Activated T-helper 2 cell treated with anti-CD3 and anti-CD28 coated beads, Interferon-gamma antibody, Interleukin-2, Interleukin-4, amounts not matched to agents 10 μg/mL and 5 μg/mL and 100 μg/mL, durations not matched to agents 14 hours and 24 hours and 36 hours (primary cell): ENCODE measurements at regions of chr12 and their contacts with region 1.

Region 1: GRCh38 chr12:89244536-89244935 is 107.8 kb downstream of the DUSP6 start:
- DNase-seq: peak; percentile 47
- H3K4me3 Mint-ChIP-seq: peak overlapping the region; percentile 35
- H3K27ac Mint-ChIP-seq: peak overlapping the region; percentile 85
- H3K4me1 Mint-ChIP-seq: peaks cover 67% of the 10 kb centered on the region
- H3K27me3 Mint-ChIP-seq: no peaks in the 10 kb centered on the region

Region 2: DNA sequence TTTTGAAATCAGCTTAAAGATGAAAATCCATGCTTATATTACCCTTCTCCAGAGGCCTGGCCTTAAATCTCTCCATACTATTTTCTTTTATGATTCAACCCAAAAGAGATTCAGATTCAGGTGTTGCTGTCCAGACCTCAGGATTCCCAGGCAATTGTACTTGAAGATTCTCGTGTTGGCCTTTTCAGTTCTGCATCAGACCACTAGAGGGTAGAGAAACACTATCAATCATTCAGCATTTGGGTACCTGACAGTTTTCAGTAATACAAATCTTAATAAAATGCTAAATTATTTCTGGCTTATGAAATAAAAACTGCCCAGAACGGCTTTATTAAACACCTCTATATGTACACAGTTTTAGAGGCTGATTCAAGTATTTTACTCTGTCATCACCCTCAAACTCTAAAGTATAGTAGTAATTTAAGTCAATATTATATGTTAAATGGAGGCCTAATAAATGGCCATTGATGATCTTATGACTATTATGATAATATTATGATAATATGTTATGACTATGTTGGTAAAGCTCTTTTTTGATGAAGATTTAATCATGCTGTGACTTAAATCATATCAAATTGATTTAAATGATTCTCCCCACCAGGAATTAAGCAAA is 193.4 kb before region 1 on chr12:
- intact Hi-C with region 1: loop called (anchors 1 kb)
- DNase-seq: no peak
- H3K4me3 Mint-ChIP-seq: no peak overlapping the region
- H3K27ac Mint-ChIP-seq: peak overlapping the region; percentile 42
- H3K4me1 Mint-ChIP-seq: peaks cover 43% of the 10 kb centered on the region
- H3K27me3 Mint-ChIP-seq: no peaks in the 10 kb centered on the region

Region 3: GRCh38 chr12:89179983-89180382 is 64.6 kb before region 1 on chr12:
- intact Hi-C with region 1: loop called (anchors 1 kb)
- DNase-seq: no peak
- H3K4me3 Mint-ChIP-seq: peak overlapping the region; percentile 50
- H3K27ac Mint-ChIP-seq: peak overlapping the region; percentile 86
- H3K4me1 Mint-ChIP-seq: peaks cover 71% of the 10 kb centered on the region
- H3K27me3 Mint-ChIP-seq: no peaks in the 10 kb centered on the region

Region 4: GRCh38 chr12:89261982-89262381 is 17.4 kb after region 1 on chr12:
- intact Hi-C with region 1: loop called (anchors 1 kb)
- DNase-seq: no peak
- H3K4me3 Mint-ChIP-seq: no peak overlapping the region
- H3K27ac Mint-ChIP-seq: peak overlapping the region; percentile 28
- H3K4me1 Mint-ChIP-seq: peaks cover 52% of the 10 kb centered on the region
- H3K27me3 Mint-ChIP-seq: no peaks in the 10 kb centered on the region

Region 5: DNA sequence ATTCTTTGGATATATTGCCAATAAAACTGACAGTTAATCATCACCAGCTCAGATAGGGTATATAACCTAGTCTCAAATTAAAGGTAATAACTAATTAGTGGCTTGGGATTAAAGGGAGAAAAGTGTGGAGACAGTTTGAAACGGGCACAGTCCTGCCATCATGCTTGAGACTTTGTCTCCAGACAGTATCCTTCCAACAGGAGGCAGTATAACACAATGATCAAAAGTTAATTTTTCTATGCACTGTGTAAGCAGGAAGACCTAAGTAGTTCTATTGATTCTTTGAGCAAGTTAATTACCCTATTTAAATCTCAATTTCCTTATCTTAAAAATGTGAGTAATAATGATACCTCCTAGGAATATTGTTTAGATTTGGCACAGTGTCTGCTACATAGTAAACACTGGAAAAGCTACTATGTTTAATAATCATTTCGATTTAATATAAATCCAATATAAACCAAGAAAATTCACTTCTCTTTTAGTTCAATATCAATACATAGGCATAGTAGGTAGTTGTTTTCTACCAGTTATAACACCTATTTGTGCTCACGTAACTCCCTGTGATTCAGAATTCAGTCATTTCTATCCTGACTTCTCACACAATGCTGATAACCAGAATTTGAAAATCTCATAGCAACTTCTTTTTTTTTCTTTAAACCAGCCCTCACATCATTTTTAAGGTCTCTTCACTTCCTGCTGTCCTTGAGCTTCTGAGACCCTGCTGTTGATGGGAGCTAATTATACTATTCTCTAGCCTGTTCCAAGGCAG is 226.4 kb after region 1 on chr12:
- intact Hi-C with region 1: loop called (anchors 1 kb)
- DNase-seq: no peak
- H3K4me3 Mint-ChIP-seq: no peak overlapping the region
- H3K27ac Mint-ChIP-seq: peak overlapping the region; percentile 63
- H3K4me1 Mint-ChIP-seq: peaks cover 65% of the 10 kb centered on the region
- H3K27me3 Mint-ChIP-seq: no peaks in the 10 kb centered on the region